Left cardiac atrium (tissue), 4 donors: ENCODE measurements at regions of chr20 and their contacts with region 1.

Region 1: DNA sequence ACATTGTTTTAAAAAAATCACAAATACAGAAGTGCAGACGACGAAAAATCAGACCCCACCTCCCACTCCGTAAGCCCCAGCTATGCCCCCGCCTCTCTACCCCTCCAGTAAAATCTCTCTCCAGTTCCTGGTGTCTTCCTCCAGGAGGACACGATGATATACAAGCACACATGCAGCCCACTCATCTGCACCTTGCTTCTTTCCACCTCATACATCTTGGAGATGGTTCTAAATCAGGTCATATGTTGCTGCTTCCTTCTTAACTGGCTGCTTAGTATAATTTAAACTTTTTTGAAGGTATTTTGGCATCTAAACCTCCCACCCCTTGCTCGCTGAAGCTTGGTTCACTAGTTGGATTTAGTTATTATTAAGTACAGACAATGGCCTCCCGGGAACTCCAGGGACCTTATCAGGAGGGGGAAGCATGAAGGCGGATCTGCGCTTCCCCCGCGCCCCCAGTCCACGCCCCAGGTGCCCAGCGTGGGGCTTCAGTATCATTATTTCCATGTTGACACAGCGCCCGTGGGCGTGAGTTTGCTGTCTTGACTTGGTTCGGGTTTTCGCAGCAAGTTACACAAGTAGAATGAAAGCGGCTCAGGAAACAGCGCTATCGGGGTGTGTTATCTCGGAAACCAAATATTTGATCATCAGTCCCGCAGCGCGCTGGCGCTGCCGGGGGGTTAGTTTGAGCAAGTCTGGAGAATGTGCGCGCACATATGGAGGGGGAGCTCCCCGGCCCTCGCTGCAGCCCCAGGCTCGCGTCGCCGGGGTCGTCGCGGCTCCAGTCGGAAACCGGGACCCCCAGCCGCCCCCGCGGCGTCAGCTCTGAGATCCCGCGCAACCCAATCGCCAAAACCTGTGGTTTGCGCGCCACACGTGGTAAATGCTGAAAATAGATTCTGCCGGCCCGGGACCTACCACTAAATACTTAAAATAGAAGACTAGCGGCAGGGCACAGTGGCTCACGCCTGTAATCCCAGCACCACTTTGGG is 2.3 kb downstream of the BMP7 start:
- DNase-seq: no peak
- ATAC-seq: no peak

Region 2: DNA sequence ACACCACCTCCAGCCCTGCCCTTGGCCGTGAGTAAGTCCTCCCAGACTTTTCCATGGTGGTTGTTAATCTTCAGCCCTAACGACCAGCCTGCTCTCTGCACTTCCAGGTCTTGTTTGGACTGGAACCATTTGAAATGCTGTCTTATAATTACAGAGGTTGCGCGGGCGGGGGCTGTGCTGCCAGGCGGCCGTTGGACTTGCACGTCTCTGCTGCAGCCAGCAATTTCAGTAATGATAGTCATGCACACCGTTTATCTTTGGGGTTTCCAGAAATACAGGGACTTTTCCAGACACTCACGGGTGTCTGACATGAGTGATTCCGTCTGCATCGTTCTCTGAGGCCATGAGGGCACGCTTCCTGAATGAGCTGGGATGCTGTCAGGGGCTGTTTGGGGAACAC is 115.8 kb before region 1 on chr20:
- intact Hi-C with region 1: loop called in 1 of 2 experiments (anchors 5 kb)
- DNase-seq: peak; percentile 50
- ATAC-seq: peak; percentile 41 to 90

Region 3: GRCh38 chr20:57794600-57795341 is 530.7 kb after region 1 on chr20:
- intact Hi-C with region 1: no loop called
- DNase-seq: no peak
- ATAC-seq: no peak